WTC11 (cell line): ENCODE measurements at regions of chr15 and their contacts with region 1.

Region 1: GRCh38 chr15:72230196-72231065 is 559 bp downstream of the PKM start:
- DNase-seq: peak; percentile 81
- ATAC-seq: peak; percentile 9
- H3K4me3 Mint-ChIP-seq: peak overlapping the region; percentile 99
- H3K27ac Mint-ChIP-seq: peak overlapping the region; percentile 99
- H3K4me1 Mint-ChIP-seq: peaks cover 53% of the 10 kb centered on the region
- H3K27me3 Mint-ChIP-seq: peaks cover 36% of the 10 kb centered on the region
- CTCF ChIP-seq: no peak

Region 2: DNA sequence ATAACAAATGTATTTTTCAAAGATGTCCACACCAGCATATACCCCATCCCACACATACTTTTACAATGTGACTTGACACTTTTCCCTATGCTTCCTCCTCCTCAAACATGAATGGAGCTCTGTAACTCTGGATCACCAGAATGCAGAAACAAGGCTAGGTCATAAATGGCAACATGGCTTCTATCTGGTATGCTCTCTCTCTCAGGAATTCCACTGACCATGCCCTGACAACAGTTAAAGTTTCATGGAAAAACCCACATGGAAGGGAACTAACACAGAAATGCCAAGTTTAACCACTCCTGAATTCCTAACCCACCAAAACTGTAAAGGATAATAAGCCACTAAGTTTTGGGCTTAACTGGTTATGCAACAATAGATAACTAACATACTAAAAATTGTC is 132.4 kb before region 1 on chr15:
- CTCF ChIA-PET with region 1: no interaction called
- POLR2A ChIA-PET with region 1: no interaction called
- DNase-seq: no peak
- ATAC-seq: no peak
- H3K4me3 Mint-ChIP-seq: no peak overlapping the region
- H3K27ac Mint-ChIP-seq: no peak overlapping the region
- H3K4me1 Mint-ChIP-seq: no peaks in the 10 kb centered on the region
- H3K27me3 Mint-ChIP-seq: no peaks in the 10 kb centered on the region
- CTCF ChIP-seq: no peak

Region 3: DNA sequence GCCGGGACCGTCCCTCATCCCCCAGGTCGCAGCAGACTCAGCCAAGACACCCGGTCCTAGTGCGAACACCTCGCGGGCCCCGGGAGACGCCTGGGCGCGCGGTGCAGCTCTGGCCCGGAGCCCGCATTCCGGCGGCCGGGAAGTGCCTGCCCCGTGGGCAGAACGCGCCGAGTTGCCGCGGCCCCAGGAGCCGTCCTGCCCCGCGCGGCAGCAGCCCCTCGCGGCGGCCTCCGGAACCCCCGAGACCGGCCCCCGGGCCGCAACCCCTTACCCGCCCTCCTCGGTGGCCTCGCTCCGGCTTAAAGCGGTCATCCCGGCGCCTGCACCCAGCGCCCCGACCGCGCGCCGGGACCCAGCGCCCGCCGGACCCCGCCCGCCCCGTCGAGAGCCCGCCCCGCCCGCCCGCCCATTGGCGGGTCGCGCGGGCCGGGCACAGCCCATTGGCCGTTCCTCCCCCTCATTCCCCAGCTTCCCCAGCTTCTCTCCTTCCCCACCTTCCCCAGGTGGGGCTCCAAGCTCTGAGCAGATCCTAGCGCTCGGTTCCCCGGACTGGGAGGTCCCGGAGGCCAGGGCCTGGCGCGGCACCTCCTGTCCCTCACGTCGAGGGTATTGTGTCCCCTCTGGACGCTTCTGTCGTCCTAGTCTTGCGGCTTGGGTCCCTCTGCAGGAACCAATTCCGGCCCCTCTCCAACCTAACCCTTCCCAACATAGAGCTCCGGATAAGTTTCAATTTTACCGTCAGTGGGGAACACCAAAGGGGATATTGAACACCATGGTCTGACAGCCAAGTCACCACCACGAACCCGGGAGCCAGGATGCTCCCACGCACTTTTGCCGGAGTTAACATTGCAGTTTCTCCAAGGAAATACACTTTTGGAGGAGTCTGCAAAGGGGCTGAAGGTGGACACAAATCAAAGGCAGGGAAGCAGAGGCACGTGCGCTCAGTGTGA is 32.7 kb before region 1 on chr15 and contains the start of gene GRAMD2A:
- CTCF ChIA-PET with region 1: interaction called, 19 read pairs
- POLR2A ChIA-PET with region 1: interaction called, 8 read pairs
- DNase-seq: peak; percentile 72
- ATAC-seq: peak; percentile 81
- H3K4me3 Mint-ChIP-seq: peak within 1 kb of the TSS; percentile 77
- H3K27ac Mint-ChIP-seq: peak within 1 kb of the TSS; percentile 83
- H3K4me1 Mint-ChIP-seq: peaks cover 37% of the 10 kb centered on the region
- H3K27me3 Mint-ChIP-seq: peaks cover 31% of the 10 kb centered on the region
- CTCF ChIP-seq: no peak
- total RNA-seq, gene GRAMD2A: 1.8 to 2.6 TPM (median 1.9 TPM) in 3 replicates

Region 4: GRCh38 chr15:72319360-72319984 is 89.0 kb after region 1 on chr15:
- CTCF ChIA-PET with region 1: no interaction called
- POLR2A ChIA-PET with region 1: interaction called, 11 read pairs
- DNase-seq: peak; percentile 90
- ATAC-seq: peak; percentile 88
- H3K4me3 Mint-ChIP-seq: peak overlapping the region; percentile 43
- H3K27ac Mint-ChIP-seq: no peak overlapping the region
- H3K4me1 Mint-ChIP-seq: peaks cover 12% of the 10 kb centered on the region
- H3K27me3 Mint-ChIP-seq: peaks cover 70% of the 10 kb centered on the region
- CTCF ChIP-seq: no peak